PC-3 (cell line): ENCODE measurements at regions of chr4 and their contacts with region 1.

Region 1: GRCh38 chr4:152485726-152486276 is 50.1 kb downstream of the FBXW7 start:
- DNase-seq: peak; percentile 87
- ATAC-seq: peak; percentile 97
- H3K4me3 ChIP-seq: peak overlapping the region; percentile 35
- H3K27ac ChIP-seq: peak overlapping the region; percentile 75
- H3K4me1 ChIP-seq: peaks cover 51% of the 10 kb centered on the region
- H3K27me3 ChIP-seq: no peaks in the 10 kb centered on the region
- CTCF ChIP-seq: no peak

Region 2: DNA sequence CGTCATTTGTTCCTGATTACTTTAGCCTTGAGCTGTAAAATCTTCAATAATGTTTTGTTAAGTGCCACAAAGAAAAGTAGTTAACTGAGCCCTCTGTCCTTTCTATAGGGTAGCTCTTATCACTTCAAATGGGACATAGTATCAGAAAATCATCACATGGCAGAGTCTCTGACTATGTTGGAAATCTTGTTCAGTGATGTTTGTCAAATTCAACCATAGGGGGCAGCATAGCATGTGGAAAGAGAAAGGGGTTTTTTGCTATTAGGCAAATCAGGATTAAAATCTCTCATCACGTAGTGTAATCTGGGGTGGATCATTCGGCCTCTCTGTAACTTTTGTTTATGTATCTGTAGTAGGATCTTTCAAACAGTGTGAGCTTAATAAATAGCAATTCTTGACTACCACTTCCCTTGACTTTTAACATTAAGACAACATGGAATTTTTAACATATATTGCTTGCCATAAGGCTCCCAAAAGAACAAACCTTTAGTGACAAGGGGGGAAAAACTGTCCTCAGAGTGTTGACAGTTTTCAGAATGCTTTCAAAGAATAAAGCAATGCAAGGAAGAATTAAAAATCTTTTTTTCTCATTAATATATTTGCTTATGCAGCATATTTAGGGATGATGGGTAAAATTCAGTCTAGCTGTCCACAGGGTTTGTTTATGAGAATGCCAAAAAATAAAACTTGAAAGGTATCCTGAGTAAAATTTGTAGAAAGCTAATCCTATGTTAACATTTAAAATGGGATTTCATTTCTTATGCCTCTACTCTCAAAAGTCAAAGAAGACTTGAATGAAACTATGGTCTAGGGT is 77.1 kb before region 1 on chr4:
- CTCF ChIA-PET with region 1: no interaction called
- POLR2A ChIA-PET with region 1: no interaction called
- intact Hi-C with region 1: loop called (anchors 2 kb)
- DNase-seq: peak; percentile 55
- ATAC-seq: no peak
- H3K4me3 ChIP-seq: no peak overlapping the region
- H3K27ac ChIP-seq: no peak overlapping the region
- H3K4me1 ChIP-seq: no peaks in the 10 kb centered on the region
- H3K27me3 ChIP-seq: no peaks in the 10 kb centered on the region
- CTCF ChIP-seq: peak; percentile 77

Region 3: GRCh38 chr4:152679414-152680281 is 193.8 kb after region 1 on chr4 and contains the start of gene TMEM154:
- CTCF ChIA-PET with region 1: no interaction called
- POLR2A ChIA-PET with region 1: no interaction called
- intact Hi-C with region 1: no loop called
- DNase-seq: peak; percentile 67
- ATAC-seq: peak; percentile 65
- H3K4me3 ChIP-seq: peak within 1 kb of the TSS; percentile 82
- H3K27ac ChIP-seq: peak within 1 kb of the TSS; percentile 90
- H3K4me1 ChIP-seq: peaks cover 36% of the 10 kb centered on the region
- H3K27me3 ChIP-seq: no peaks in the 10 kb centered on the region
- CTCF ChIP-seq: no peak
- total RNA-seq, gene TMEM154: 3.6 and 8.1 TPM in 2 replicates